Activated CD8-positive, alpha-beta T cell treated with anti-CD3 and anti-CD28 coated beads for 36 hours (primary cell): ENCODE measurements at regions of chr14 and their contacts with region 1.

Region 1: DNA sequence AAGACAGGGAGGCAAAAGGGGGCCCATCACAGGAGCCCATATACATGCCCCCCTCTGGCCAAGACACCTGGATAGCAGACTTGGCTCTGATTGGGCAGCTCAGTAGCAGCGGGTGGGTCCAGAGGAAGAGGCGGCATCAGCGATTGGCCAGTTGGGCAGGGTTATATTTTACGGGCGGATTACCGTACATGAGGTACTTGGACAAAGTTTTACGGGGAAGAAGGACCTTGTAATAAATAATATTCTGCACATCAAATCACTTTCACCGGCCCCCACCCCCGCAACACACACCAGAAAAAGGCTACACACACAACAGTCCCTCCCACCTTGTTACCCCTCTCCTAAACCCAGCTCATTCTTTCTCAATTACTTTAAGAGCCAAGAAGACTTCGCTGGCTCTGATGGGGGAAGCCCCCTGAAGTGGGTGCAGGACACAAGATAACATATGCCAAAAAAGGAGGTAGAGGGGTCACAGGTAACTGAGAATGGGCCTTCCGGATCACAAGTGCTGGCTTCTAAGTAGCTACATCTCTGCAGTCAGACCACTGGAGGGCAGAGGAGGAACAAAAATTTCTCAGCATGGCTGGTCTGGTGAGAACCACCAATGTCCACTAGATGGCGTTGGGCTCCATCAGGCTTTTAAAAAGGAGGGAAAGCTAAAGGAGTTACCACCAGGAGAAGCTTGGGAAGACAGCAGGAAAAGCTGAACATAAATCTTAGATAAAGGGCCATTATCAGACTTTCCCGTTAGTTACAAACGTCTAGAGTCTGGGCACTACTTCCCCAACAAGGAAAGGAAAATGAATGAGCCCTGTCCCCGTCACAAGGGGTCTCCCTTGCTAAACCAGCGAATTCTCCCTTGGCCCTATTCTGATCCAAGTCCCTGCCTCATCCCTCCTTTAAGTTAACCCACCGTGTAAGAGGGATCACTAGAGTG is 11.4 kb upstream of the CDH24 start:
- DNase-seq: peak; percentile 84
- ATAC-seq: peak; percentile 79
- H3K4me3 Mint-ChIP-seq: peak overlapping the region; percentile 47
- H3K27ac Mint-ChIP-seq: peak overlapping the region; percentile 69
- H3K4me1 Mint-ChIP-seq: peaks cover 36% of the 10 kb centered on the region
- H3K27me3 Mint-ChIP-seq: no peaks in the 10 kb centered on the region
- CTCF ChIP-seq: peak; percentile 96

Region 2: DNA sequence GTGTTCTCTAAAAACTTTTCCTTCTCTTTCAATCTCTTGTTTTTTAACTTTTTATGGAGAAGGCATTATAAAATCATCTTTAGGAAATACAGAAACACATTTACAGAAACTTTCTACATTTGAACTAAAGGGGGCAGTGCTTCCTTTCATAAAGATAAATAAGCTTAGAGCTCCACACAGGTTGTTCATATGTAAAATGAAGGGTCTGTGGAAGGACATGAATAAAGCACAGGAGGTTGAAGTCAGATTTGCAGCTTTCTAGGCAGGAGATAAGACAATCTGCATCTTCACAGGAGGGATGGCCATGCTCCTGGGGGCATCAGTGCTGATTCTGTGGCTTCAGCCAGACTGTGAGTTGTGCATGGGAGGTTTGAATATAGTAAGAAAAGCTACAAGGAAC is 905.7 kb before region 1 on chr14:
- CTCF ChIA-PET with region 1: no interaction called
- POLR2A ChIA-PET with region 1: no interaction called
- intact Hi-C with region 1: no loop called
- DNase-seq: no peak
- ATAC-seq: no peak
- H3K4me3 Mint-ChIP-seq: peak overlapping the region; percentile 75
- H3K27ac Mint-ChIP-seq: peak overlapping the region; percentile 88
- H3K4me1 Mint-ChIP-seq: peaks cover 16% of the 10 kb centered on the region
- H3K27me3 Mint-ChIP-seq: no peaks in the 10 kb centered on the region
- CTCF ChIP-seq: no peak

Region 3: DNA sequence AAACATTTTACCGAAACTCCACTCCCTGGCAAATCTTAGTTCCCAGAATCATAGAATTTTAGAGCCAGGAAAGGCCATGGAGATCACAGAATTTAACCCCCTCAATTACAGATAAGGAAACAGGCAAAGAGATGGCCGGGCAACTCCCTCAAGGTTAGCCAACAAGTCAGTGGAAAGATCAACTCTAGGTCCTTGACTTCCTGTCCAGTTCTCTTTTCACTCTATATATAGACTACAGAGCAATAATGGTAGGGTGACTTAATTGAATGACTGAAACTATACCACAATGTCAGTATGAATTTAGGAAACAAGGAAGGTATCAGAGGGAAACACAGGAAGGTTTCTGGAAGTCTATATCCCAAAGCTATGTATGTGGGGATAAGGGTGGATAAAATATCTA is 290.7 kb before region 1 on chr14:
- CTCF ChIA-PET with region 1: no interaction called
- POLR2A ChIA-PET with region 1: no interaction called
- intact Hi-C with region 1: no loop called
- DNase-seq: no peak
- ATAC-seq: no peak
- H3K4me3 Mint-ChIP-seq: no peak overlapping the region
- H3K27ac Mint-ChIP-seq: no peak overlapping the region
- H3K4me1 Mint-ChIP-seq: no peaks in the 10 kb centered on the region
- H3K27me3 Mint-ChIP-seq: no peaks in the 10 kb centered on the region
- CTCF ChIP-seq: no peak

Region 4: DNA sequence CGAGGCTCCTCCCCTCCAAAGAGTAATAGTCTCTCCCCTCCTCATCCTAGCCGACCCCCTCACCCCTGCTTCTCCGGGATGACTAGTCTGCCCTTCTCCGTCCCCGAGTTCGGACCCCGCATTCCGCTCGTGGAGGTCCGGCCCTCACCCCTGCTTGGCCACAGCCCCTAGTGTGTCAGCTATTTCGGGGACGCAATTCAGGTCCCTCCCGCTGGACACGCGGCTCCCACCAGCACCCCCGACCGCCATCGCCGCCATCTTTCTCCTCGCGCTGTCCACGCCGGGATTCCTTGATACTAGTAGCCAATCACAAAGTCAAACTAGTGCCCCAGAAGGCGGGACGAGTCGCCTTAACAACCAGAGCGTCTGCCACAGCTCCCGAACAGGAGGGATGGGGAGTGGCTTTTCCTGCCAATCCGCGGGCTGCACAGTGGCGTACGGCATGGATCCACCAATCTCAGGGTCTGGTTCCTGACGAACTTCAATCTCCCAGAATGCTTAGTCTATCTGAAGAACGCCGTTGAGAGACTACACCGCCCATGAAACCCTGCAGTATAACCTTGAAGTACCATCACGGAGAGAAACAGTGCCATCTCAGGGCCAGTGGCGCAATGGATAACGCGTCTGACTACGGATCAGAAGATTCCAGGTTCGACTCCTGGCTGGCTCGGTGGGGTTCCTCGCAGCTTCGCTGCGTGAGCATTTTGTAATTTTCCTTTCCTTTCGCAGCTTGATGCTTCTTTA is 139.5 kb before region 1 on chr14 and contains the start of gene PRMT5:
- CTCF ChIA-PET with region 1: interaction called, 17 read pairs
- POLR2A ChIA-PET with region 1: no interaction called
- intact Hi-C with region 1: no loop called
- DNase-seq: peak; percentile 99
- ATAC-seq: peak; percentile 96
- H3K4me3 Mint-ChIP-seq: no peak within 1 kb of the TSS
- H3K27ac Mint-ChIP-seq: no peak within 1 kb of the TSS
- H3K4me1 Mint-ChIP-seq: peaks cover 31% of the 10 kb centered on the region
- H3K27me3 Mint-ChIP-seq: no peaks in the 10 kb centered on the region
- CTCF ChIP-seq: no peak
- total RNA-seq, gene PRMT5: 107 to 116 TPM

Region 5: GRCh38 chr14:22986508-22987054 is 82.2 kb before region 1 on chr14:
- CTCF ChIA-PET with region 1: interaction called, 518 read pairs
- POLR2A ChIA-PET with region 1: interaction called, 6 read pairs
- intact Hi-C with region 1: no loop called
- DNase-seq: peak; percentile 95
- ATAC-seq: peak; percentile 61
- H3K4me3 Mint-ChIP-seq: no peak overlapping the region
- H3K27ac Mint-ChIP-seq: no peak overlapping the region
- H3K4me1 Mint-ChIP-seq: no peaks in the 10 kb centered on the region
- H3K27me3 Mint-ChIP-seq: no peaks in the 10 kb centered on the region
- CTCF ChIP-seq: peak; percentile 94

Region 6: DNA sequence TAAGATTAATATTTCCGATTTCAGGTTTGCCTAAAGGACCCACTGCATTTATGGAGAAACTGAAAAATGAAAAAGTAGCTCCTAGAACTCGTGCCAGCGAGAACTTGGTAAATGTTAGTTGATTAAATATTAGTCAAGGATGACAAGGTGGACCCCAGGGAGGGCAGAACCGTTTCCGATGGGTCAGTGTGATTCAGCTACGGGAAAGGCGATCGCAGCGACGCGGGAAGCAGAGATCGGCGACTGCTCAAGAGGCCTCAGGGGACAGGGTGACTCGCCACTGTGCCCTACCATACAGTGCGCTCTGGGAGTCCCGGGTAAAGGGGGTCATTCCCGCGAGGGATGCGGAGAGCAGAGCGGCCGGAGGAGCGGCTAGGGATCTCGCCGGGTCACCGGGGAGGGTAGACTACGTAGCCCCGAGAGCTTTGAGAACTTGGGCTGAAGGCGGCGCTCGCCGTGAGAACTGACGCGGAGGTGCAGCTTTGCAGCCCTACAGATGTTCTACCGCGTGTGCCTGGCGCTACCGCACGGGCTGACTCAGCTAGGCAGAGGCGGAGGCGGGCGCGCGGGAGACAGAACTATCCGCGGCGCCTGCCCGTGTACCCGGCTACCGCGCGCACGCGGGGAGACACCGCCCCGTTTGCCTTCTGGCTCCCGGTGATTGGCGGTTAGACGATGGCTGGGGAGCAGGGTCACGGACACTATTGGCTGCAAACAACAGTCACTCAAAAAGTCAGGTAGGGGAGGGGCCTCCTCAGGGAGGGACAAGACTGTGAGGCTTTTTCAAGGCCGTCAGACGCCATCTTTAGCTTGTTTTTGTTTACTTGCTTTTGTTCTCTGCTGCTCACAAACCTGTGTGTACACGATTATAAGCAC is 62.0 kb before region 1 on chr14:
- CTCF ChIA-PET with region 1: interaction called, 31 read pairs
- POLR2A ChIA-PET with region 1: interaction called, 6 read pairs
- intact Hi-C with region 1: no loop called
- DNase-seq: peak; percentile 98
- ATAC-seq: peak; percentile 96
- H3K4me3 Mint-ChIP-seq: peak overlapping the region; percentile 91
- H3K27ac Mint-ChIP-seq: peak overlapping the region; percentile 97
- H3K4me1 Mint-ChIP-seq: peaks cover 34% of the 10 kb centered on the region
- H3K27me3 Mint-ChIP-seq: no peaks in the 10 kb centered on the region
- CTCF ChIP-seq: peak; percentile 39

Region 7: DNA sequence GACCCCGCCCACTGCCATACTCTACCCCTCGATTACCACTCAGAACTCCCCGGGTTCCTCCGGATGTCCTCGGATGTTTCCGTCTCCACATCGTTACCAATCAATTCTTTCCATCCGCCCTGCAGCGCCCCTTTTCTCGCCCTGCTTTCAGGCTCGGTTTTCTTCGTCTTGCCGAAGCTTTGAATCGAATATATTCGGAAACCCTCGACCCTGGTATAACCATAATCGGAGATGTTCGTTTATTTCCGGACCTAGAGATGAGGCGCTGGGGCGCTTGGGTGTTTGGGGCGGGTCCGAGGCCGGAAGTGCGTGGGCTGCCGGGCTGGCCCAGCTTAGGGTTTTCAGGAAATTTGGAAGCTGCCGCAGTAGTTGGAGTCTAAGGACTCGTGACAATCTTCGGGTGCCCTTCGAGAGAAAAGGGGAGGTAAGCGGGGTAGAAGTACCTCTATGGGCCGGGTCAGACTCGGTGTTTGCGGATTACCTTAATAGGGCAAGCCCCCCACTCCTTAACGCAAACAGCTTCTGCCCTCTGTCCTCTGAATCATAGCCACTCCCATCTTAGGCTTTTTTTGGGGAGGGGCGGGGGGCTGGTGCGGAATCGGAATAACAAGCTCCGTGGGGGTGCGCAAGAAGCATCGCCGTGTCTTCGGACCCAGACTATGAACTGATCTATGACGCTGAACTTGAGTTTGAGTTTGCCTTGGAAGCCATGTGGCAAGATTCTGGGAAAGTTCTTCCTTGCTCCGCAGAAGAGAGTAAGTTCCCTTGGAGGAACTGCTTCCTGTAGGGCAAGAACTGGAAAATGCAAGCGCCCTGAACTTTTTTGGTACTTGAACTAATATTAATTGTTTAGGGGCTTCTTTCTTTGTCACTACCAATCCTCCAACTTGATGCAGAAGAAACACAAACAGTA is 26.7 kb after region 1 on chr14 and contains the start of gene C14orf119:
- CTCF ChIA-PET with region 1: interaction called, 70 read pairs
- POLR2A ChIA-PET with region 1: interaction called, 6 read pairs
- intact Hi-C with region 1: no loop called
- DNase-seq: peak; percentile 100
- ATAC-seq: peak; percentile 91
- H3K4me3 Mint-ChIP-seq: no peak within 1 kb of the TSS
- H3K27ac Mint-ChIP-seq: no peak within 1 kb of the TSS
- H3K4me1 Mint-ChIP-seq: peaks cover 34% of the 10 kb centered on the region
- H3K27me3 Mint-ChIP-seq: no peaks in the 10 kb centered on the region
- CTCF ChIP-seq: no peak
- total RNA-seq, gene C14orf119: 49.2 to 51.1 TPM

Region 8: DNA sequence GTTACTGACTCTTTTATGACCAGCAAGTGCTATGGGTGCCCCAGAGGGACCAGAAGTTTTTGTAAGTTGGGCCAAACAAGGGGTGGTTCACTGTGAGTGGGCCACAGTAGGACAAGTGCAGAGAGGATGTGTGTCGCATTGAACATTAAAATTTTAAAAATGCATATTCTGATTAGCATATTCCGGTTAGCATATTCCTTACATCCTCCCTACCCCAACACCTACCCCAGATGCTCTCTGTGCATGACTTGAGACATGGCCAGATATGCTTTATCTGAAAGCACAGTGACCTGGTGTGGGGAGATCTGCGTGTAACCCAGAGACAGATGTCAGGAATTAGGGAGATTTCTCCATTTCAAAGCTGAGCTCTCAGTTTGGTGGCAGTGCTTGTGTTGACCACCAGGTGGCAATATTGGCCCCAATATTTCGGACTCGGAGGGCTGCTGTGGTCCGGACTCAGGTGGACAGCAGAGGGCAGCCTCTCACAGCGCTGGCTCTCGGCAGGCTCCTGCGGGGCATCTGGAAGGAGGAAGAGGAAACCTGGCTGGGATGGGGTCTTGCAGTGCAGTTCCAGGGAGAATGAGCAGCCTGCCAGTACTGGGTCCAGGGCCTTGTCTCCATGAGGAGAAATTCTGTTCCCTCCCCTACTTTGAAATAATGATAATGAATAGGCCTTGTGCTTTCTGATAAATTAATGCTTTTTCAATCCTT is 52.0 kb after region 1 on chr14:
- CTCF ChIA-PET with region 1: interaction called, 29 read pairs
- POLR2A ChIA-PET with region 1: interaction called, 5 read pairs
- intact Hi-C with region 1: no loop called
- DNase-seq: peak; percentile 90
- ATAC-seq: peak; percentile 88
- H3K4me3 Mint-ChIP-seq: no peak overlapping the region
- H3K27ac Mint-ChIP-seq: peak overlapping the region; percentile 84
- H3K4me1 Mint-ChIP-seq: peaks cover 43% of the 10 kb centered on the region
- H3K27me3 Mint-ChIP-seq: no peaks in the 10 kb centered on the region
- CTCF ChIP-seq: peak; percentile 100